A549 (cell line): ENCODE measurements at regions of chrX and their contacts with region 1.

Region 1: DNA sequence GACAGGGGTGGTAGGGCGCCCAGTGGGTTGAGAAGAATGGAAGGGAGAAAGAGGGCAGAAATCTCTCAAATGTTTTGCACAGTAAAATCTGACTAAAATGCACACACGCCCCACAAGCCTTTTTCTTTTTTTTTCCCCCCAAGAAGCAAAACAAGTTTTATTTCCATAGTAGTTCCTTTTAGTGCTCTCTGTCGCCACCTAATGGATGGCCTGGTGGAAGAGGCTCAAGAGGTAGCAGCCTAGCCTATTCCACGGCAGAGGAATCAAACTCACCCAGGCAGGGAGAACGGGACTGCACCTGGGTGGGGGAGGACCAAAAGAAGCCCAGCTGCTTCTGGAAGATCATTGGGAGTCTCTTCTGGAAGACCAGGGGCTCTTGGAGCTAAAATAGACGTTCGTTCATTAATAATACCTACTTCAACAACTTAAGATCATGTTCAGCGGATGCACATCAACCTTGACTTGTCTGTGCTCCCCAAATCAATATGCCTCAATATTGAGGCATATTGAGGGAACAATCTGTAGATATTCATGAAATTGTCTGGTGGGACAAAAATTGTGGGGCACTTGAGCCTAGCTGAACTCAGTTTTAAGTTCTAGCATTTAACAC is 31.6 kb upstream of the IRAK1 start:
- DNase-seq: peak; percentile 51 to 52
- ATAC-seq: peak; percentile 77 to 82; a peak in 5 of 6 replicates
- H3K4me3 ChIP-seq: no peak overlapping the region
- H3K27ac ChIP-seq: no peak overlapping the region
- H3K4me1 ChIP-seq: peaks cover 37% of the 10 kb centered on the region
- CTCF ChIP-seq: peak; percentile 60
- EP300 ChIP-seq: no peak
- POLR2A ChIP-seq: no peak
- RAD21 ChIP-seq: peak; percentile 40 to 48; a peak in 4 of 5 replicates

Region 2: DNA sequence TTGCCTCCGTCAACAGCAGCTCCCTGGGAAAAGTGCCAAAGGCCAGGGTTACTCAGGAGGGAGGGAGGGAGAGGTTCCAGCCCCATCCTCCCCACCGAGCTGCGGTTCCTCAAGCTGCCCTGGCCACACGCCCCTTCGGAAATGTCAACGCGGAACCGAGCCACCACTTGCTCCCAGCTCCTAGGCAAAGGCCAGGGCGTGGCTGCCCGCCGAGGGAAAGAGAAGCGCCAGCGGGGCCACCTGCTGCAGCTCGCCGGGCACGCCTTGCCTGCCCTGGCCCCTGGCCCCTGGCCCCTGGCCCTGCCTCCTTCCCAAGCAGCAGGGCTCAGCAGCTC is 348.3 kb before region 1 on chrX:
- CTCF ChIA-PET with region 1: no interaction called
- POLR2A ChIA-PET with region 1: no interaction called
- DNase-seq: no peak
- ATAC-seq: no peak
- H3K4me3 ChIP-seq: no peak overlapping the region
- H3K27ac ChIP-seq: no peak overlapping the region
- H3K4me1 ChIP-seq: no peaks in the 10 kb centered on the region
- CTCF ChIP-seq: no peak
- EP300 ChIP-seq: no peak
- POLR2A ChIP-seq: no peak
- RAD21 ChIP-seq: no peak

Region 3: DNA sequence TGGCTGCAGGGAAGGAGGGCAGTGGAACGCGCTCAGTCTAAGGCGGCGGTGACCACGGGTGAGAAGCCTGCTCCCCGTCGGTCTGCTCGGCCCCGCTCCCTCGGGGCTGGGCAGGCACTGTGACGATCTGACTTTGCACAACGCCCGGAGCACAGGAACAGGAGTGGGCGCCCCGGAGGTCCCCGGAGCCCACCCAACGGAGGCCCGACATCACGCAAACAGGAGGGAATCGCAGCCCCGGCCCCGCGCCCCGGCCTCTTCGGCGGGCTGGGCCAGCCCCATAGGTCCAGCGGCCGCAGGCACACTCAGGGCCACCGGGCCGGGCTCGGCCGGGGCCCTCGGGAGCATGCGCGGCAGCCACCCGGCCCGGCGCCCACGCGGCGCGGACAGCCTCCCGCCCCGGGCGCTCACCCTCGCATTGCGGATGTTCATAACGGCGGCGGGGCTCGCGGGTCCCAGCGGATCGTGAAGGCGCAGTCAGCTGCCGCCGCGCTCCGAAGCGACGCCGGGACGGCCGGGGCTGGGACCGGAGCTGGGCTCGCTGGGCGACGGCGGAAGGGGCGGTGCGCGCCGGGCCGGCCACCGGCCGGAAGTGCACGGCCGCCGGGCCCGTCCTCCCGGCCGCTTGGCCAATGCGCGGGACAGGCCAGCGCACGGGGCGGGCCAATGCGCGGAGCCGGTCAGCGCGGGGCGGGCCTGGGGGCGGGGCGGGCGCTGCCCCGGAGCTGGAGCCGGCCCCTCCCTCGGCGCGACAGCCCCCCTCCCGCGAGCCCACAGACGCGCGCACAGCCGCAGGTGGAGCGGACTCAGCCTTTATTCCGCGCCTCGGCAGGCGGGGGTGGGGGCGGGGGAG is 116.6 kb before region 1 on chrX and contains the start of gene NAA10:
- CTCF ChIA-PET with region 1: no interaction called
- POLR2A ChIA-PET with region 1: no interaction called
- DNase-seq: peak; percentile 72
- ATAC-seq: peak; percentile 95 to 96
- H3K4me3 ChIP-seq: peak within 1 kb of the TSS; percentile 91
- H3K27ac ChIP-seq: peak within 1 kb of the TSS; percentile 86 to 92
- H3K4me1 ChIP-seq: peaks cover 9% of the 10 kb centered on the region; the same call in 2 of the 3 replicates
- CTCF ChIP-seq: no peak
- EP300 ChIP-seq: no peak
- POLR2A ChIP-seq: peak; percentile 63
- RAD21 ChIP-seq: no peak
- polyA plus RNA-seq, gene NAA10: 63.5 and 88.8 TPM in 2 replicates

Region 4: GRCh38 chrX:154019633-154020528 is 31.4 kb before region 1 on chrX and contains the start of gene IRAK1:
- CTCF ChIA-PET with region 1: interaction called, 13 read pairs
- POLR2A ChIA-PET with region 1: interaction called, 11 read pairs
- DNase-seq: peak; percentile 47 to 60
- ATAC-seq: peak; percentile 72 to 84
- H3K4me3 ChIP-seq: peak within 1 kb of the TSS; percentile 63
- H3K27ac ChIP-seq: peak within 1 kb of the TSS; percentile 99
- H3K4me1 ChIP-seq: peaks cover 17% of the 10 kb centered on the region
- CTCF ChIP-seq: peak; percentile 31; the same call in 2 of the 3 replicates
- EP300 ChIP-seq: no peak
- POLR2A ChIP-seq: peak; percentile 63
- RAD21 ChIP-seq: no peak
- polyA plus RNA-seq, gene IRAK1: 73.1 and 73.6 TPM in 2 replicates

Region 5: GRCh38 chrX:154061801-154062200 is 10.5 kb after region 1 on chrX:
- CTCF ChIA-PET with region 1: interaction called, 12 read pairs
- POLR2A ChIA-PET with region 1: no interaction called
- DNase-seq: no peak
- ATAC-seq: no peak
- H3K4me3 ChIP-seq: no peak overlapping the region
- H3K27ac ChIP-seq: no peak overlapping the region
- H3K4me1 ChIP-seq: peaks cover 15% of the 10 kb centered on the region; the same call in 2 of the 3 replicates
- CTCF ChIP-seq: no peak
- EP300 ChIP-seq: no peak
- POLR2A ChIP-seq: no peak
- RAD21 ChIP-seq: no peak